ENCODE measurements at regions of chr5 and their contacts with region 1.

Region 1: DNA sequence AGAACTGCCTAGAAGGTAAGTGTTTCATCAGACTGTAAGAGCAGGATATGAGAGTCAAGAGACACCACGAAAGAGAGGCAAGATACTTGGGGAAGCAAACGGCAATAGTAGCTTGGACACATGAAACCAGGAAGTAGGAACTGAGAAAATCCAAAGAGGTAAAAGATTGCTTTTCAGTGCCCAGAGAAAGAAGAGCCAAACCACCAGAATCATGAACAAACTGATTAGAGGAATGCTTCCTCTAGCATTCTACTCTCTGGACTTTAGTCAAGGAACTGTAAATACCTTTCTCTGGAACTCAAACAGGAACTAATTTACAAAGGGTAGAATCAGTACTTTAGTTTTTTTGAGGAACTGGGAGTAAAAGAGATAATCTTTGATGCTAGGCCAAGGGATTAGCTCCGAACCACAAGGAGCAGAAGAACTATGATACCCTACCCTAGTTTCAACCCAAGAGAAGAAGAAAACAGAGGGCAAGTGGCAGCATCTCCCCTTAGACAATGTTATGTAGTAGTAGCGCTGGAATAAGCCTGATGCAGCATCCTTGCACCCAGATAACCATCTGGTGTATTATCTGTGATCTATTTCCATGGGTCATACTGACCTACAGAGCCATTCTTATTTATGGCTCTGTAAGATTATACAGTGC is 41.3 kb downstream of the EFCAB9 start:
- DNase-seq: no peak
- H3K4me3 Mint-ChIP-seq: no peak overlapping the region
- H3K27ac Mint-ChIP-seq: no peak overlapping the region
- H3K4me1 Mint-ChIP-seq: peaks cover 45% of the 10 kb centered on the region
- H3K27me3 Mint-ChIP-seq: peaks cover 2% of the 10 kb centered on the region

Region 2: GRCh38 chr5:172223901-172224873 is 11.1 kb before region 1 on chr5:
- intact Hi-C with region 1: loop called (anchors 1 kb)
- DNase-seq: no peak
- H3K4me3 Mint-ChIP-seq: no peak overlapping the region
- H3K27ac Mint-ChIP-seq: peak overlapping the region; percentile 87
- H3K4me1 Mint-ChIP-seq: peaks cover 28% of the 10 kb centered on the region
- H3K27me3 Mint-ChIP-seq: peaks cover 5% of the 10 kb centered on the region